Breast epithelium (tissue), 4 donors: ENCODE measurements at regions of chr20 and their contacts with region 1.

Region 1: GRCh38 chr20:48620519-48621254 is 207.1 kb downstream of the PREX1 start:
- DNase-seq: peak; percentile 89 to 93
- H3K4me3 ChIP-seq: peak overlapping the region in 2 of 3 donors; percentile 35 to 44
- H3K27ac ChIP-seq: no peak overlapping the region
- H3K4me1 ChIP-seq: peaks cover 3 to 11% of the 10 kb centered on the region in 2 donors
- H3K27me3 ChIP-seq: no peaks in the 10 kb centered on the region
- CTCF ChIP-seq: peak; percentile 94 to 97 (median 94)
- POLR2A ChIP-seq: no peak

Region 2: DNA sequence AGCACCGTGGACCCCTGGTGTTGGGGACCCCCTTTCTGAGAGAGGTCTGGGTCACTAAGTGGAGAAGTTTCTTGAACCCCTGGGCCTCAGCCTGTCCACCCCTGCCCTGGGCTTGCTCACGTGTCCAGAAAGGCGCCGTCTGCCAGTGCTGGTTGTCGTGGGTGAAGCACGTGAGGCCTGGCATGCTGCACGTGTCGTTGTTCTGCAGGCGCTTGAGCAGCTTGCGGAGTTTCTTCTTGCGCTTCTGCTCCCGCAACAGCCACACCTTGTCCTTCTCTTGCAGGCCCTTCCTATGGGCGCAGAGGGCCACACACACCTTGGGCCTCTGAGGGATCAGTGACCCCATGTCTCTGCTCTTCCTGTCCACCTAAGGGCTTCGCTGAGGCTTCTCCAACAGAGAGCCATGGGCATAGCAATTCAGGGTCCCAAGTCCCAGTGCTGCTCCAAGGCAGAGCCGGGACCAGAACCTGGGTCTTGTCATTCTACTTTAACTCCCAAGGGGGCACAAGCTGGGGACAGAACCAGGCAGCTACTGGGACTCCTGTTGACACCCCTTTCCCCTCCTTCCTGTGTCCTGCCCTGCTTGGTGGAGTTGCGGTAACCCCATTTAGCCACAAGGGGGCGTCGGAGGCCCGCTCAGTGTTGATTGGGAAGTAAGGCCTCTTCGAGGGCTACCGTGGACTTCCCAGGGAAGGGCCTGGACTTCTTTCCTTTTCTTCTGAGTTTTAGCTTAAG is 957.2 kb before region 1 on chr20:
- intact Hi-C with region 1: loop called (anchors 10 kb)
- DNase-seq: peak; percentile 65 to 80
- H3K4me3 ChIP-seq: no peak overlapping the region
- H3K27ac ChIP-seq: no peak overlapping the region
- H3K4me1 ChIP-seq: no peaks in the 10 kb centered on the region
- H3K27me3 ChIP-seq: no peaks in the 10 kb centered on the region
- CTCF ChIP-seq: peak; percentile 87 to 95 (median 92)
- POLR2A ChIP-seq: no peak

Region 3: GRCh38 chr20:48682529-48683251 is 62.0 kb after region 1 on chr20:
- intact Hi-C with region 1: no loop called
- DNase-seq: peak; percentile 63 to 66
- H3K4me3 ChIP-seq: peak overlapping the region in 2 of 3 donors; percentile 5 to 49
- H3K27ac ChIP-seq: peak overlapping the region; percentile 52 to 63
- H3K4me1 ChIP-seq: peaks cover 7 to 13% of the 10 kb centered on the region in 2 donors
- H3K27me3 ChIP-seq: no peaks in the 10 kb centered on the region
- CTCF ChIP-seq: no peak
- POLR2A ChIP-seq: no peak